Sciatic nerve (tissue), 2 donors: ENCODE measurements at regions of chr2 and their contacts with region 1.

Region 1: DNA sequence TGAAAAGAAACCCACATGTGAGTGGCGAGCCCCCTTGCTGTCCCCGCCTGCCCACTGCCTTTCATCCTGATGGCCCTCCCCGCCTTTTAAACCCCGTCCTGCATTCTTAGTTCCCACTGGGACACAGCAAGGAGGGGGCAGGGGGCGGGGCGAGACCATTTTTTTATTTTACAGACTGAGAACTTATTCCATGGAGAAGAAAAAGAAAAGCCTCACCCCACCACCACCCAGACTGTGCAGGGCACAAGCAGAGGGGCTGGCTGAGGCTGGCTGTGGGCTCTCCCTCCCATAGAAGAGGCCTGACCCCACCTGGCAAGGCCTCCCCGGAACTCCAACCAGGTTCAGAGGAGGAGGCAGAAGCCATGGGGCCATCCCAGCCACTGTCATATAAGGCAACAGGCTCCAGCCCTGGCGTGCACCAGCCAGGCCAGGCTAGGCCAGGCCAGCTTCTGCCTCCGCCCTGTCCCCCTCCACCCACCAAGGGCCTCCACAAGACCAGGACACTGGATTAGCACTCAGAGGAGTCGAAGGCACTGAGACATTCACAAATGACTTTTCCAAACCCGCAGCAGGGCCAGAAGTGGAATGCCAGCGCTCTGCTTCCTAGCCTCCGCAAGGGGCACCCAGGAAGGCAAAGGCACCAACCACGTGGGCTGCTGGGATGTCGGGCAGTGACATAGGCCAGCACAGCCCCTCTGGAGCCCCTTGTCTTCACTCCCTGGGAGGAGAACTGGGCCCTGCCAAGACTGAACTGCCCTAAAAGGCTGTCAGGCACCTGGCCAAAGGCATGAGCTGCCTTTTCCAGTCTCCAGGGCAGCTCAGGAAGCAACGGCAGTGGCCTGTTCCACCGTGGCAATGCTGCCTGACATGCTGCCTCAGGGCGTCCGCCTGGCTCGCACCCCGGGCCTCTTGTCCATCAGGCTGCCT is 37.5 kb upstream of the SEMA4C start:
- DNase-seq: peak; percentile 85
- ATAC-seq: peak; percentile 94

Region 2: DNA sequence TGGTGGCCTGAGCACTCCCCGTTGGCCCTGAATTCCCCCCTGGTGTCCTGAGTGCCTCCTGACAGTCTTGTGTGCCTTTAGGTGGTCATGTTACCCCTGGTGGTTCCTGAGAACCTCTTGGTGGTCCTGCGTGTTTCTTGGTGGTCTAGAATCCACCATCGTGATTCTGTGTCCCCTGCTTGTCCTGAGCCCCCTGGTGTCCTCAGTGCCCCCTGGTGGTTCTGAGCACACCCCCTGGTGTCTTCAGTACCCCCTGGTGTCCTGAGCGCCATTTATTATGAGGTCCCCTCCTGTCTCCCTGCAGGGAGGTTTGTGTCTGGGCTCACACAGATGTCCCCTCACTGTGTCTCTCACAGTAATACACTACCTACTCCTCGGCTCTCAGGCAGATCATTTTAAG is 1943.2 kb before region 1 on chr2:
- intact Hi-C with region 1: no loop called
- DNase-seq: no peak
- ATAC-seq: no peak

Region 3: DNA sequence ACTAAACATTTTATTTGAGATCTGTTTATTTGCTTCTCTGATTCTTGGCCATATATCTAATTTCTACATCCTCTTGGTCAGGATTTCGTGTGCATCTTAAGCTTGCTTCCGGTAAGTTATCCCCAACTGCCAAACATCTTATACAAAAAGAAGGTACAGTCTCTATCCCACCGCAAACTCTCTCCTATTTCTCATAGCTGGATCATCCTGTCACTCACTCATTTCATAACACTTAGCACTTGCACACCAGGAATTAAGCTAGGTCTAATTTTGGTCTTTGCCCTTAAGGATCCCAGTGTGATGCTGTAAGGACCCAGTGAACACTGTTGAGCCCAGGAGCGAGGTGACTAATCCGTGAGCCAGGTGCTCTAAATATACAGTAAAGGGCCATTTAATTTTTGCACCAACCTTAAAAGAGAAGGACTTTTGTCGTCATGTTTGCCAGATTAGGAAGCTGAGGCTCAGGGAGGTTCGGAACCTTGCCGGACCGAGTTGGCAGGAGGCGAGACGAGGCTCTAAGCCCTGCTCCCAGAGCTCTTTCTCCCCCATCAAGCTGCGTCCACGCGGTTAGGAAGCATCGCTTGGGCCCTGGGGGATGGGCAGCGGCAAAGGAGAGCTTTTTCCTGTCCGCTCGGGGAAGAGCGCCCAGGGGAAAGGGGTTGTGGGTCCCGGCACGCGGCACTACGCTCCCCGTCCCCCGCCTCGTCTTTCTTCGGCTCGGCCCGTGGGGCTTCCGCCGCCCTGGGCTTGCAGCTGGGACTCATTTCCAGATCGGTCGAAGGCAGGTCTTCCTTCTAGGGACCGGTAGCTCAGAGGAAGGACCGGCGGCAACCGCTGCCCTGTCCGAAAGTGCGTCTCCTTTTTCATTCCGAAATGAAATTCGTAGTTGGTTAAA is 586.4 kb before region 1 on chr2:
- intact Hi-C with region 1: loop called (anchors 10 kb)
- DNase-seq: no peak
- ATAC-seq: peak; percentile 66

Region 4: GRCh38 chr2:98242003-98242402 is 1334.6 kb after region 1 on chr2:
- intact Hi-C with region 1: no loop called
- DNase-seq: no peak
- ATAC-seq: no peak